Activated B cell treated with CpG ODN at 0.5 μM for 24 hours (primary cell): ENCODE measurements at regions of chr20 and their contacts with region 1.

Region 1: DNA sequence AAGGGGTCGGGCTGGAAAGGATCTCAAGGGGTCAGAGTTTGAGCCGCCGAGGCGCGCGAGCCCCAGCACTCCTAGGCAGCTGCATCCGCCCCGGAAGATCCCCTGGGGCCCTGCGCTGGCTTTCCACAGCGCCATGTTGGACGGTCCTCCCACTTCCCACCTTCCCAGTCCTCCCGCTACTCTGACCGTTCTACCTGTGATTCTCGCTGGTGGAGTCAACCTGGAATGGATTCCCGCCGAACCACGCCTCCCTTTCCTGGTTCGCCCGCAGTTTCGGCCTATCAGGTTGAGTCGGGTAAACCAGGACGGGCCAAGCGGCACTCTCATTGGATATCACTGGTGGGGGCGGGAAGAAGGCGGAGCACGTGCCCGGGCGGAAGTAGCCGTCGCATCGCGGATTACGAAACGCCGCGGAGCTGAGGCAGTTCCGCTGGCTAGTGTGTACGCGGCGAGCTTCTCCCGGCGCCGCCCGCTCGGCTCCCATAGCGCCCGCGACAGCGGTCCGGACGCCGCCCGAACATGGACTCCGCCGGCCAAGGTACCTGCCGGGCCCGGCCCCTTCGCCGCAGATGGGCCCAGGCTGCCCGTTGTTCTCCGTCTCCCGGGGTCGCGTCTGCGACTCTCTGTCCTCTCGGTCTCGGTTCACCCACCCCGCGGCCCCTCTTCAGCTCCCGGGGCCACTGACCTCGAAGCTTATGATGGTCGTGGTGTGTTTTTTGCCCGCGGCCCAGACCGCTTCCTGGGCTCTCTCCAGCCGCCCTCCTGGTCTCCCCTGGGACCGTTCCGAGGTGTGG is at the start of gene TPD52L2:
- DNase-seq: peak; percentile 93
- ATAC-seq: peak; percentile 82
- H3K4me3 Mint-ChIP-seq: peak within 1 kb of the TSS; percentile 99
- H3K27ac Mint-ChIP-seq: peak within 1 kb of the TSS; percentile 99
- H3K4me1 Mint-ChIP-seq: peaks cover 33% of the 10 kb centered on the region
- H3K27me3 Mint-ChIP-seq: no peaks in the 10 kb centered on the region
- CTCF ChIP-seq: no peak
- total RNA-seq, gene TPD52L2: 36.7 and 38.8 TPM in 2 replicates

Region 2: DNA sequence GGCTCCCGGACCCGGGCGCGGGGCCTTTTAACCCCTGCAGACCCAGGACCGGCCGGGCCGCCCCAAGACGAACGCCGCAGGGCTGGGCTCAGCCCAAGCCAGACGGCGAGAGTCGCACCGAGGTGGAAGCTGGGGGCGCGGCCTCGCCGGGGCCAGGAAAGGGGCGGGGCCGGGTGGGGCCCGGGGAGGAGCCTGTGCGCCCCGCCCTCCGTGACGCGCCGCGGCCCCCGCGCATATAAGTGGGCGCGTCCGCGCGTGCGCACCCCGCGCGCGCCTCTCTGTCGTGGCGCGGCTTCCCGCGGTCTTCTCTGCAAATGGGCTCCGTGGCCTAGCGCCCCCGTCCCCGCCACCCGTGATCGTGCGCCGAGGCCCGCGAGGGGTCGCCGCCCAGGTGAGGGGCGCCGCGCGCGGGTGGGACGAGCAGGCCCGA is 344.5 kb before region 1 on chr20 and contains the start of gene PPDPF:
- CTCF ChIA-PET with region 1: interaction called, 3 read pairs
- POLR2A ChIA-PET with region 1: interaction called, 37 read pairs
- intact Hi-C with region 1: no loop called
- DNase-seq: peak; percentile 84
- ATAC-seq: peak; percentile 81
- H3K4me3 Mint-ChIP-seq: peak within 1 kb of the TSS; percentile 81
- H3K27ac Mint-ChIP-seq: peak within 1 kb of the TSS; percentile 61
- H3K4me1 Mint-ChIP-seq: peaks cover 33% of the 10 kb centered on the region
- H3K27me3 Mint-ChIP-seq: no peaks in the 10 kb centered on the region
- CTCF ChIP-seq: no peak
- total RNA-seq, gene PPDPF: 170 and 172 TPM in 2 replicates

Region 3: DNA sequence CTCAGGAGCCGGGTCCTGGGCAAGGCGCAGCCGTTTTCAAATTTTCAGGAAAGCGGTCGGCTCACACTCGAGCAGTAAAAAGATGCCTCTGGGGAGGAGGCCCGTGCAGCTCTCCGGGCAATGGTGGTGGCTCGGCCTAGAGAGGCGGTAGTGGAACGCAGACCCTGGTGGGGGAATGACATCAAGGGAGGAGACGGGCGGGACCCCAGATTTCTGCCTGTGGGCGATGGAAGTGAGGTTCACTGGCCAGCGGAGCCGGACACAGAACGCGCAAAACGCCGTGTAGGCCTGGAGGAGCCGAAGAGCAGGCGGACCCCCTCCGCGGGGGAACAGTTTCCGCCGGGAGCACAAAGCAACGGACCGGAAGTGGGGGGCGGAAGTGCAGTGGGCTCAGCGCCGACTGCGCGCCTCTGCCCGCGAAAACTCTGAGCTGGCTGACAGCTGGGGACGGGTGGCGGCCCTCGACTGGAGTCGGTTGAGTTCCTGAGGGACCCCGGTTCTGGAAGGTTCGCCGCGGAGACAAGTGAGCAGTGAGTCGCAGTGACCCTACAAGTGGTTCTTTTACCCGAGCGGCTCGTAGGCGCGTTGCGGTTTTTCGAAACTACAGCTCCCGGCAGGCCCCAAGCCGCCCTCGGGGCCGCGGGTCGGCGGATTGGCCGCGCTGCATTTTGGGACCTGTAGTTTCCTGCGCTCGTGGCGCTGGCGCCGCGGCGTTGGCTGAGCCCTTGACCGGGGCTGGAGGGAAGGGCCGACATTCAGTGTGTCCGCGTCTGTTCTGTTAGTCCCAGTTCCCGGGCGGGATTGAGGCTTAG is 206.9 kb before region 1 on chr20 and contains the start of gene RTEL1:
- CTCF ChIA-PET with region 1: no interaction called
- POLR2A ChIA-PET with region 1: interaction called, 8 read pairs
- intact Hi-C with region 1: loop called (anchors 1 kb)
- DNase-seq: peak; percentile 95
- ATAC-seq: peak; percentile 88
- H3K4me3 Mint-ChIP-seq: peak within 1 kb of the TSS; percentile 97
- H3K27ac Mint-ChIP-seq: peak within 1 kb of the TSS; percentile 93
- H3K4me1 Mint-ChIP-seq: peaks cover 27% of the 10 kb centered on the region
- H3K27me3 Mint-ChIP-seq: peaks cover 3% of the 10 kb centered on the region
- CTCF ChIP-seq: no peak
- total RNA-seq, gene RTEL1: 24.1 and 33.8 TPM in 2 replicates

Region 4: GRCh38 chr20:63782051-63782471 is 83.0 kb before region 1 on chr20:
- CTCF ChIA-PET with region 1: interaction called, 16 read pairs
- POLR2A ChIA-PET with region 1: interaction called, 4 read pairs
- intact Hi-C with region 1: loop called (anchors 1 kb)
- DNase-seq: no peak
- ATAC-seq: peak; percentile 33
- H3K4me3 Mint-ChIP-seq: no peak overlapping the region
- H3K27ac Mint-ChIP-seq: no peak overlapping the region
- H3K4me1 Mint-ChIP-seq: peaks cover 6% of the 10 kb centered on the region
- H3K27me3 Mint-ChIP-seq: no peaks in the 10 kb centered on the region
- CTCF ChIP-seq: no peak

Region 5: GRCh38 chr20:63894358-63895201 is 29.5 kb after region 1 on chr20 and contains the start of gene DNAJC5:
- CTCF ChIA-PET with region 1: interaction called, 3 read pairs
- POLR2A ChIA-PET with region 1: interaction called, 25 read pairs
- intact Hi-C with region 1: loop called (anchors 1 kb)
- DNase-seq: peak; percentile 97
- ATAC-seq: peak; percentile 92
- H3K4me3 Mint-ChIP-seq: peak within 1 kb of the TSS; percentile 88
- H3K27ac Mint-ChIP-seq: peak within 1 kb of the TSS; percentile 90
- H3K4me1 Mint-ChIP-seq: peaks cover 45% of the 10 kb centered on the region
- H3K27me3 Mint-ChIP-seq: no peaks in the 10 kb centered on the region
- CTCF ChIP-seq: no peak
- total RNA-seq, gene DNAJC5: 27.5 and 28.6 TPM in 2 replicates

Region 6: GRCh38 chr20:63980806-63981728 is 116.0 kb after region 1 on chr20 and contains the start of gene PRPF6:
- CTCF ChIA-PET with region 1: interaction called, 5 read pairs
- POLR2A ChIA-PET with region 1: interaction called, 28 read pairs
- intact Hi-C with region 1: loop called (anchors 1 kb)
- DNase-seq: peak; percentile 90
- ATAC-seq: peak; percentile 65
- H3K4me3 Mint-ChIP-seq: peak within 1 kb of the TSS; percentile 92
- H3K27ac Mint-ChIP-seq: peak within 1 kb of the TSS; percentile 94
- H3K4me1 Mint-ChIP-seq: peaks cover 50% of the 10 kb centered on the region
- H3K27me3 Mint-ChIP-seq: no peaks in the 10 kb centered on the region
- CTCF ChIP-seq: peak; percentile 25
- total RNA-seq, gene PRPF6: 75.7 and 75.8 TPM in 2 replicates